Ovary (tissue), 10 donors: ENCODE measurements at regions of chr15 and their contacts with region 1.

Region 1: GRCh38 chr15:31128919-31129768 is 27.6 kb upstream of the TRPM1 start:
- DNase-seq: peak; percentile 33 to 86 (median 68)
- H3K4me3 ChIP-seq: no peak overlapping the region
- H3K27ac ChIP-seq: no peak overlapping the region
- H3K4me1 ChIP-seq: peaks cover 7% of the 10 kb centered on the region
- H3K27me3 ChIP-seq: no peaks in the 10 kb centered on the region
- CTCF ChIP-seq: peak; percentile 51 to 65 (median 54)
- EP300 ChIP-seq: no peak
- POLR2A ChIP-seq: no peak

Region 2: DNA sequence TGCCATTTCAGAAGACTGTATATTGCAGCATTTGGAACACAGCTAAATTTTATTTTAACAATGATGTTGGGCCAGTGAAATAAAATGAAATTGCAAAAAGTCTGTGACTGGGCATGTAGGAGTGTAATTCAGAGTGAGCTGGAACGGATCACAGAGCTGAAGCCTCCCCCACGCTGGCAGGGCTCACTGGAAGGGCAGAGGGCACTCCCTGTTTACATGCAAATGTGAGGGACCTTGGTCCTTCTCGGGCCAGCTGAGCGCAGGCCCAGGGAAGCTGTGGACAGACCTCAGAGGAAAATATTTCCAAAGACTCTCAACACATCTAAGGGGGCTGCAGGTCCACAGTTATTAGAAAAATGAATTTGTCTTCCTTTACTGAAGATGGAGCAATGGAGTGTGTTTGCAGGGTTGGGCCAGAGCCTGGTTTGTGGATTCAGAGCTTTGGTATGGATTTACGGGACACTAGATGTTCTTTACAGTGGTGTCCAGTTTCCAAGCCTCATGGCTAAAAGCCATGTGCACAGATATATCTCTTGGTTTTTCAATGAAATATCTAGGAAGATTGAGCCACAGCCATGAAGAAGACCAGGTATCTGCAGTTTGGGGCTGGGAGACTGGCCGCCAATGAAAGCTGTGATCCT is 59.7 kb before region 1 on chr15:
- intact Hi-C with region 1: loop called in 1 of 4 experiments (anchors 10 kb)
- DNase-seq: peak; percentile 60 to 86 (median 68)
- H3K4me3 ChIP-seq: no peak overlapping the region
- H3K27ac ChIP-seq: peak overlapping the region in 1 of 2 donors; percentile 19
- H3K4me1 ChIP-seq: peaks cover 13% of the 10 kb centered on the region
- H3K27me3 ChIP-seq: no peaks in the 10 kb centered on the region
- CTCF ChIP-seq: no peak
- EP300 ChIP-seq: no peak
- POLR2A ChIP-seq: no peak

Region 3: DNA sequence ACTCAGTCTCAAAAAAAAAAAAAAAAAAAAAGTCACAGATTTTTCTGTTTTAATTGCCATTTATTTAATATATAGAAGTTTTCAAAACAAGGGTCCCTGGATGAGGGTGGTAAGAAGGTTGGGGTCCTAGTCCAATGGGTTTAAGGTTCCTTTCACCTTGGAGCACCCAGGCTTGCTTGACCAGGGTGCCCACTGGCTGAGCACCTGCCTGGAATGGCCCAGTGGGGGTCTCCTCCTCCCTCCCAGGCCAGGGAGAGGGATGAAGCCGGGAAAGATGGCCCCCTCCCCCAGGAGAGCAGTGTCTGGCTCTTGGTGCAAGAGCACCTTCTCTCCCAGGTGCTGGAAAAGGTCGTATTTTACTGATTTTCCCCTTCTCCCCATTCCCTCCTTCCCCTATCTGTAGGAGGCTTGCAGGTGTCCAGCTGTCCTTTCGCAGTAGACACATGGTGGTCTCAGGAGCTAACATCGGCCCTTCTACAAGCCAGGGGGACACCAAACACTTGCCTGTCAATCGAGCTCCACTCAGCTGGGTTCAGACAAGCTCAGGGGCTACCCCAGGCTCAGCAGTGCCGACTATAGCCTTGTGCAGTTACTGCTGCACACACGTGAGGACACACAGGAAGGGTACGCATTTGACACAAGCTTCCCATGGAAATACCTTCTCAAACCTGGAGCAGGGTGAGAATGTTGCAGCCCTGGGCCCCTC is 85.2 kb after region 1 on chr15:
- intact Hi-C with region 1: no loop called
- DNase-seq: no peak
- H3K4me3 ChIP-seq: no peak overlapping the region
- H3K27ac ChIP-seq: no peak overlapping the region
- H3K4me1 ChIP-seq: peaks cover 8% of the 10 kb centered on the region
- H3K27me3 ChIP-seq: no peaks in the 10 kb centered on the region
- CTCF ChIP-seq: no peak
- EP300 ChIP-seq: no peak
- POLR2A ChIP-seq: no peak

Region 4: DNA sequence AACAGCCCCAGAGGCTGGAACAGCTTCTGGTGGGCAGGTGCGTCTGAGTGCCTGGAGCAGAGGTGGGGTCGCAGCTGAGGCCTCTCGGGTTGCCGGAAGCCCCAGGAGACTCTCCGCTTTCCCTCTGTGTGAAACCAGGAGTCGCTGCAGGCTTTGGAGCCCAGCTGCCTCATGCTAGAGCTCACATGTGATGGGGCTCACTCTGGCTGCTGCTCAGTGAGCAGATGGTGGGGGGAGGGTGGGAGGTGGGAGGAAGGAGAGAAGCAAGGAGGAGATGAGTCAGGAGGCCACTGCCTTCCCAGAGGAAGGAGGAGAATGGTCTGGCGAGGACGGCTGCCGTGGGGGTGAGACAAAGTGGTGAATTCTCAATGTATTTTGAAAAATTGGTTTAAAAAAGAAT is 611.1 kb after region 1 on chr15:
- intact Hi-C with region 1: loop called in 1 of 4 experiments (anchors 10 kb)
- DNase-seq: no peak
- H3K4me3 ChIP-seq: no peak overlapping the region
- H3K27ac ChIP-seq: no peak overlapping the region
- H3K4me1 ChIP-seq: no peaks in the 10 kb centered on the region
- H3K27me3 ChIP-seq: no peaks in the 10 kb centered on the region
- CTCF ChIP-seq: no peak
- EP300 ChIP-seq: no peak
- POLR2A ChIP-seq: no peak